ENCODE measurements at regions of chr6 and their contacts with region 1.

Region 1: GRCh38 chr6:27608916-27609883 is 136.3 kb upstream of the ZNF184 start:
- DNase-seq: peak; percentile 86
- H3K4me3 ChIP-seq: no peak overlapping the region
- H3K27ac ChIP-seq: peak overlapping the region; percentile 11
- H3K4me1 ChIP-seq: peaks cover 17% of the 10 kb centered on the region
- H3K27me3 ChIP-seq: no peaks in the 10 kb centered on the region
- CTCF ChIP-seq: peak; percentile 85 to 89

Region 2: DNA sequence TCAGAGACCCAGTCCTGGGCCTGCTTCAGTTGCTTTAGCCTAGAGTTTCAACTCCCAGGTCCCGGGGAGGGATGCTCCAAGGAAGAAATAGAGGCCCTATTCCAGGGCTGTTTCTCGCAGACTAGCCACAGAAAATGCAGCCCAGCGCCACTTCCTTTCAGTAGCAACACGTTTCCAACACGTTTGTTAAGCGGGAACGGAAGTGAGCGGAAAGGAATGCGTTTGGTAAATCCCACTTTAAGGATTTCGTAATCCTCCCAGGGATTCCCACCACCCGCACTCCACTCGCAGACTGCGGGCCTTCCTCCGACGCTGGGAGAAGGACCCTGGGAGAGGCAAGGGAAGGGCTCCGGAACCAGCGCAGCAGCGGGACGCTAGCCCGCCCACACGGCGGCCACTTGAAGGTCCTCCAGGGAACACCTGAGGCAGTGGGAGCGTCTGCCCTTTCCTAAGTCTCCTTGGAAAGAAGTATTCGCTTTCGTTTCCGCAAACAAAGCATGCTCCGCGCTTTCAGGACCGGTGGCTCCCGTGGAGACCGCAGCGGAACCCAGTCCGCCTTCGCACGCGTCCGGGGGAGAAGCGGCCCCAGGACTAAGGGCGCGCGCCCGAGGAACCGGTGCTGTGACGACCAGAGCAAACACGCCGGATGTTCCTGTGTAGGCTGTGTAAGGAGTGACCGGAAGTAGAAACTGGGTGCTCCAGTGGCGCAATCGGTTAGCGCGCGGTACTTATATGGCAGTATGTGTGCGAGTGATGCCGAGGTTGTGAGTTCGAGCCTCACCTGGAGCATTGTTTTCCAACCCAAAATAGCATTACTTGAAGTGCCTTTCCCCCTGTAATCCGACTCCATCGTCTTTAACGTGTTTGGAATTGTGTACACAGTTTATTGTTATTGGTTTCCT is 589.3 kb before region 1 on chr6:
- CTCF ChIA-PET with region 1: no interaction called
- dilution Hi-C with region 1: no loop called
- in situ Hi-C with region 1: no loop called
- intact Hi-C with region 1: no loop called
- DNase-seq: peak; percentile 90
- H3K4me3 ChIP-seq: peak overlapping the region; percentile 60 to 63 (median 62)
- H3K27ac ChIP-seq: peak overlapping the region; percentile 81
- H3K4me1 ChIP-seq: peaks cover 9% of the 10 kb centered on the region
- H3K27me3 ChIP-seq: no peaks in the 10 kb centered on the region
- CTCF ChIP-seq: no peak

Region 3: DNA sequence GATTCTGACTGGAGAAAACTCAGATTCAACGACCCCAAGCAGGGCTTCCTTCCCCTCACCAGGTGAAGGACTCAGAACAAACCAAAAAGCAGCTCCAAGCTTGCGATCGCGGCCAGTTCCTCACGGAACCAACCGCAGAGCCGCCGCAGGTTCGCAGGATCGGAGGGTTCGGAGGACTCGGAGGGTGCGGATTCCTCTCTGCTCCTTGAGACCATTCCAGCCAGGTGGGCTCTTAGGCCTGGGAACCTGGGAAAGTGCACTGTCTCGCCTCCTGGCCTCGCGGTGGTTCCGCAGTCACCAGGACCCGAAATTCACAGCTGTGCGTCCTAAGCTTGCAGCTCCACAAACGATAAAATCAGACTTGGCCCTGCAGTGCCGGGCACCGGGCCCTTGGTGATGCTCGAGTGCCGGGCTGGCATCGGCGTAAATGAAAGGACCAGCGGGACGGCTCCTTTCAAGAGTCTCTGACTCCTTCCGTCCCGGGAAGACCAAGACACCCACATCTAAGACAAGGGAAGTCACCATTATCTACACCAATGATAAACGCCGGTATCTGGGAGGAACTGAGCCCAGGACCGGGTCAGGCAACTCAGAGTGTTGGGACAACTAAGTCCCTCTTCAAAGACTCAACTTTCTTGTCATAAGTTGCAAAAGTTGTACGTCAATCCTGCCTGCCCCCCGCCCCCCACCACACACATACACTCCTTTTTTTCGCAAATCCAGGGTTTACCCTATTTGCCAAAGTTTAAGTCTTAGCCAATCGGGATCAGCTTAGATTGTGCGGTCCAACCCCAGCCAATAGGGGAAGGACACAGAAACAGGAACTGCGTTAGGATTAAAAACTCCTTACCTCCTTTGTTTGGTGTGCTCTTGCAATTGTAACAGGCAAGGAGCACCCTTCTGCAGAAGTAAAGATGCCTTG is 431.5 kb before region 1 on chr6:
- CTCF ChIA-PET with region 1: no interaction called
- dilution Hi-C with region 1: no loop called
- in situ Hi-C with region 1: no loop called
- intact Hi-C with region 1: loop called (anchors 1 kb)
- DNase-seq: peak; percentile 88
- H3K4me3 ChIP-seq: peak overlapping the region; percentile 80 to 100 (median 96)
- H3K27ac ChIP-seq: peak overlapping the region; percentile 62
- H3K4me1 ChIP-seq: peaks cover 3% of the 10 kb centered on the region
- H3K27me3 ChIP-seq: no peaks in the 10 kb centered on the region
- CTCF ChIP-seq: peak; percentile 53 to 69

Region 4: DNA sequence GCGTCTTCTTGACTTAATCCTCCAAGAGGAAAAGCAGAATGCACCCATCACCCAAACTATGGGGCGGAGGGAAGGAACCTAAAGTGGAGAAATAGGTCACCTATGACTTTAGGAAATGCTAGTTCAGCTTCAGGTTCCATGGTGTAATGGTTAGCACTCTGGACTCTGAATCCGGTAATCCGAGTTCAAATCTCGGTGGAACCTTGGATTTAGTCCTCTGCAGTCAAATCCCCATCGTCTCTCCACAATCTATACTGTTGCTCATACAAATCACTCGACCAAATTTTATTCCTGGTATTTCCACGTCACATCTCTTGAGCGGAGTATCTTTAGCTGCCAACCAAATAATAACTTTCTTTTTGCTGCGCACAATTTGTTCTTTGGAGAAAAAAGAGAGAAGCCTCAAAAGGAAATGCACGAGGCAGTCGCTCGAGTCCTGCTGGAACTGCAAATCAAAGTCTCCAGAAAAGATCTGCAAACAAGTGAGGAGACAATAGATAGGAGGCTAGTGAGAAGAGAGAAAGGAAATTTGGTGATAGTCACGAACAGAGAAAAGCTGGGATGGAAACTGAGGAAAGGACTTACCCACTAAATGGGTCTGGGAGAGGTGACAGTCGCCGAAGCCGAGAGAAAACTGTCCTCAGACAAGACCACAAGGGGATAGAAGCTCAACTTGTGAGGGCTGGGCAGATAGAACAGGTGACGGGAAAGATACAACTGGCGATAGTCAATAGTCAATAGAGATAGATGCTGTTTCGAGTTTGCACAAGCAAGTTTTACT is 313.7 kb before region 1 on chr6:
- CTCF ChIA-PET with region 1: no interaction called
- dilution Hi-C with region 1: no loop called
- in situ Hi-C with region 1: loop called in 1 of 2 experiments (anchors 25 kb)
- intact Hi-C with region 1: loop called (anchors 5 kb)
- DNase-seq: peak; percentile 82
- H3K4me3 ChIP-seq: peak overlapping the region; percentile 54 to 77 (median 63)
- H3K27ac ChIP-seq: no peak overlapping the region
- H3K4me1 ChIP-seq: peaks cover 4% of the 10 kb centered on the region
- H3K27me3 ChIP-seq: no peaks in the 10 kb centered on the region
- CTCF ChIP-seq: no peak

Region 5: DNA sequence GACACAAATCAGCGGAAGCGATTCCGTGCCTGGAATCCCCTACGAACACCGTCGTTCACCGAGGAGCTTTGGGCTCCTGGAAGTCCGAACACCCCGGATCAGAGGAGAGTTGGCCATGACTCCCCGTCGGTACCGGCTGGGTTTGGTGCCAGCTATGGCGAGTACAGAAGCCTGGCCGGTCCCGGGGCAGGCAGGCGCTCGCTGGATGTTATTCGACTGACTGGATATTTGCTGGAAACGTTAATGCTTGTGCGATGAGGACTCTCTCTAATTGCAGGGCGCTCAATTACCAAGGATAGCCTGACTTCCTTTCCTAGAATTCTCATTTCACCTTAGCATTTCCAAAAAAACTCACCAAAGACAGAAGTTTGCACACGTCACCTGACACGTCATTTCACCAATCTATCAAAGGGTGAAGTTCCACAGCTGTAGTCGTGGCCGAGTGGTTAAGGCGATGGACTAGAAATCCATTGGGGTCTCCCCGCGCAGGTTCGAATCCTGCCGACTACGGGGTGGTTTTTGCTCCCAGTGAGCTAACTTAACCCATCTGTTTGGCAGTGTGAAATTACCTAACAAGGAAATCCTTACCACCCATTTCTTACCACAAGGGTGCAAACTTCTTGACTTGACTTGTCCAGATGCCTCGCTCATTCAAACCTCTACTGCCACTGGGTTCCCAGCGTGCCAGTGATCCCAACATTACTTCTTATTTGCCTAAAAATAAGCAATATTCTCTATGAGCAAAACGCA is 113.6 kb before region 1 on chr6:
- CTCF ChIA-PET with region 1: no interaction called
- dilution Hi-C with region 1: loop called (anchors 10 kb)
- in situ Hi-C with region 1: no loop called
- intact Hi-C with region 1: loop called (anchors 2 kb)
- DNase-seq: peak; percentile 93
- H3K4me3 ChIP-seq: peak overlapping the region; percentile 62 to 70 (median 65)
- H3K27ac ChIP-seq: peak overlapping the region; percentile 50
- H3K4me1 ChIP-seq: peaks cover 4% of the 10 kb centered on the region
- H3K27me3 ChIP-seq: no peaks in the 10 kb centered on the region
- CTCF ChIP-seq: peak in 1 of 2 donors; percentile 10

Region 6: DNA sequence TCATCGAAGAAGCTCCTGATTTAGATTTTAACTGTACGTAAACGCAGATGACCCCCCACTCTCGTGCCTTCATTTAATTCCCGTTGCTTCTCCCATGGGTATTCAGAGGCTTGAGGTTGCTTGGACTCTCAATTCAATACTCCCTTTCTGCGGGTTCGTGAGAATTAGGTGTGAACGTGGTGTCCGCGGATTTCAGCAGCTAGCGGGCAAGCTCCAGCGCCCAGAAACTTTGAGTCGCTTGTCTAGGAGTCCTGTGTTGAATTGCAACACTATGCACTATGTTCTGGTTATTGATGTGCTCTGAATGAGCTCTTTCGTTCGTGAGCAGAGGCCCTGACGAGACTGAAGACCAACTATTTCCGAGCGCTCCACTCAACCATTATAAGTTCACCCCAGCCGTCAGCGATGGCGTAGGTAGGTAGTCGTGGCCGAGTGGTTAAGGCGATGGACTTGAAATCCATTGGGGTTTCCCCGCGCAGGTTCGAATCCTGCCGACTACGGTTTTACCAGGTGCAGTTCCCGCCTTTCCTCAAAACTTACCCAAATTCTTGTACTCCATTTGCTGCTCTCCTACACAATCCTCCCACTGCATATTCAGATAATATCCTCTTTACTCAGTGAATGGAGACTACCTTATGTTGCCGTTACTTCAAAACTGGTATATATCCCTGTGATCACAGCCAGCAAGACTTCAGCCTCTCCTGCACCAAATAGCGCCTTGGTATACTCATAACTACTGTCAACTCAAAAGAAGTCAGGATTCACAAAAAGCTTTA is 63.7 kb before region 1 on chr6:
- CTCF ChIA-PET with region 1: no interaction called
- dilution Hi-C with region 1: no loop called
- in situ Hi-C with region 1: no loop called
- intact Hi-C with region 1: loop called (anchors 2 kb)
- DNase-seq: peak; percentile 93
- H3K4me3 ChIP-seq: peak overlapping the region; percentile 51 to 60 (median 56)
- H3K27ac ChIP-seq: peak overlapping the region; percentile 61
- H3K4me1 ChIP-seq: peaks cover 6% of the 10 kb centered on the region
- H3K27me3 ChIP-seq: no peaks in the 10 kb centered on the region
- CTCF ChIP-seq: no peak

Region 7: GRCh38 chr6:27753668-27754407 is 144.6 kb after region 1 on chr6:
- CTCF ChIA-PET with region 1: interaction called, 4 read pairs
- dilution Hi-C with region 1: no loop called
- in situ Hi-C with region 1: no loop called
- intact Hi-C with region 1: loop called (anchors 2 kb)
- DNase-seq: peak; percentile 81
- H3K4me3 ChIP-seq: peak overlapping the region; percentile 49 to 86 (median 80)
- H3K27ac ChIP-seq: peak overlapping the region; percentile 27
- H3K4me1 ChIP-seq: no peaks in the 10 kb centered on the region
- H3K27me3 ChIP-seq: no peaks in the 10 kb centered on the region
- CTCF ChIP-seq: peak in 1 of 2 donors; percentile 39

Region 8: DNA sequence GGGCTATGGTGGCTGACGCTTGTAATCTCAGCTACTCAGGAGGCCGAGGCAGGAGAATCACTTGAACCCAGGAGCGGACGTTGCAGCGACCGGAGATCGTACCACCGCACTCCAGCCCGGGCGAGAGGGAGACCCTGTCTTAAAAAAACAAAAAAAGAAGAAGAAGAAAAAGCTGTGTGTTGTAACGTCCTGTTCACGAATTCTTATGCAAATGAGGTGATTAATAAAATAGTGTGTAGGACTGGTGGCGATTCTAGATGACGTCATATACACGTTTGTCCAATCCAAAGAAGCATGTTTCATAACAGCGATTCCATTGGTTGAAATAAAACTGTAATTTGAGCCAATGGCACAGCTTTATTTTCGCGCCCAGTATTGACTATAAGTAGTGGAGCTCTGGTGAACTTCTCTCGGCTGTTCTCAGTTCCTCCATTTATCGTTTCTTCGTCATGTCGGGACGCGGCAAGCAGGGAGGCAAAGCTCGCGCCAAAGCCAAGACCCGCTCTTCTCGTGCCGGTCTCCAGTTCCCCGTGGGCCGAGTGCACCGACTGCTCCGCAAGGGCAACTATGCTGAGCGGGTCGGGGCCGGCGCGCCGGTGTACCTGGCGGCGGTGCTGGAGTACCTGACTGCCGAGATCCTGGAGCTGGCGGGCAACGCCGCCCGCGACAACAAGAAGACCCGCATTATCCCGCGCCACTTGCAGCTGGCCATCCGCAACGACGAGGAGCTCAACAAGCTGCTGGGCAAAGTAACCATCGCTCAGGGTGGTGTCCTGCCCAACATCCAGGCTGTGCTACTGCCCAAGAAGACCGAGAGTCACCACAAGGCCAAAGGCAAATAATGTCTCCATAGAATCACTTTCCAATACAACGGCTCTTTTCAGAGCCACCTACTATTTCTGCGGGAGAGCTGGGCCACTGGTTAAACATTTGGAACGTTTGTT is 256.0 kb after region 1 on chr6:
- CTCF ChIA-PET with region 1: no interaction called
- dilution Hi-C with region 1: no loop called
- in situ Hi-C with region 1: no loop called
- intact Hi-C with region 1: no loop called
- DNase-seq: peak; percentile 95
- H3K4me3 ChIP-seq: peak overlapping the region; percentile 54 to 81 (median 79)
- H3K27ac ChIP-seq: peak overlapping the region; percentile 81
- H3K4me1 ChIP-seq: peaks cover 14% of the 10 kb centered on the region
- H3K27me3 ChIP-seq: no peaks in the 10 kb centered on the region
- CTCF ChIP-seq: no peak

Region 9: GRCh38 chr6:28225056-28225834 is 616.0 kb after region 1 on chr6 and contains the start of gene ZSCAN9:
- CTCF ChIA-PET with region 1: no interaction called
- dilution Hi-C with region 1: no loop called
- in situ Hi-C with region 1: no loop called
- intact Hi-C with region 1: no loop called
- DNase-seq: peak; percentile 91
- H3K4me3 ChIP-seq: peak within 1 kb of the TSS; percentile 57 to 76 (median 66)
- H3K27ac ChIP-seq: peak within 1 kb of the TSS; percentile 62
- H3K4me1 ChIP-seq: peaks cover 9% of the 10 kb centered on the region
- H3K27me3 ChIP-seq: no peaks in the 10 kb centered on the region
- CTCF ChIP-seq: no peak
- total RNA-seq, gene ZSCAN9: 11.9 to 15.5 TPM

Measured in mammary epithelial cell (primary cell).